PC-9 (cell line): ENCODE measurements at regions of chr2 and their contacts with region 1.

Region 1: GRCh38 chr2:232292395-232293154 is 86.0 kb upstream of the ALPP start:
- DNase-seq: peak in 1 of 2 experiments; percentile 39
- H3K4me3 ChIP-seq: no peak overlapping the region
- H3K27ac ChIP-seq: no peak overlapping the region
- H3K4me1 ChIP-seq: no peaks in the 10 kb centered on the region
- H3K27me3 ChIP-seq: no peaks in the 10 kb centered on the region
- CTCF ChIP-seq: peak; percentile 74

Region 2: DNA sequence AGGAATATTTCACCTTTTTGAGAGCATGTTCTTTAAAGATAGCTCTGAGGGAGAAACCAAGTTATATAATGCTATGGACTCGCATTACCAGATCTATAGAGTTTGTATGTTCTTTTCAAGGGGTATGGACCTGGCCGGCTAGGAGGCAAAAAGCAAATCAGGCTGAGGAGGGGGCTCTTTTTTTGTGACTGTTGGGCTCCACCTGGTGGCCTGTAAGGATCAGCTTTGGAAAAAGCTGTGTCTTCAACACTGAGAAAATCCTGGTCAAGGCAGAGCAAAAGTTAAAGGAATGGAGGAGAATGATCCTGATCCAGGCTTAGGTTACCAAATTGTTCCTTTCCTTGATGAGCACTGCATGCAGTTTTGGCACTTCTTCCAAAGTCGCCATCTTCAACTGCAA is 150.5 kb before region 1 on chr2:
- CTCF ChIA-PET with region 1: no interaction called
- POLR2A ChIA-PET with region 1: no interaction called
- intact Hi-C with region 1: loop called (anchors 10 kb)
- DNase-seq: peak in 1 of 2 experiments; percentile 5
- H3K4me3 ChIP-seq: no peak overlapping the region
- H3K27ac ChIP-seq: no peak overlapping the region
- H3K4me1 ChIP-seq: no peaks in the 10 kb centered on the region
- H3K27me3 ChIP-seq: no peaks in the 10 kb centered on the region
- CTCF ChIP-seq: peak; percentile 74

Region 3: DNA sequence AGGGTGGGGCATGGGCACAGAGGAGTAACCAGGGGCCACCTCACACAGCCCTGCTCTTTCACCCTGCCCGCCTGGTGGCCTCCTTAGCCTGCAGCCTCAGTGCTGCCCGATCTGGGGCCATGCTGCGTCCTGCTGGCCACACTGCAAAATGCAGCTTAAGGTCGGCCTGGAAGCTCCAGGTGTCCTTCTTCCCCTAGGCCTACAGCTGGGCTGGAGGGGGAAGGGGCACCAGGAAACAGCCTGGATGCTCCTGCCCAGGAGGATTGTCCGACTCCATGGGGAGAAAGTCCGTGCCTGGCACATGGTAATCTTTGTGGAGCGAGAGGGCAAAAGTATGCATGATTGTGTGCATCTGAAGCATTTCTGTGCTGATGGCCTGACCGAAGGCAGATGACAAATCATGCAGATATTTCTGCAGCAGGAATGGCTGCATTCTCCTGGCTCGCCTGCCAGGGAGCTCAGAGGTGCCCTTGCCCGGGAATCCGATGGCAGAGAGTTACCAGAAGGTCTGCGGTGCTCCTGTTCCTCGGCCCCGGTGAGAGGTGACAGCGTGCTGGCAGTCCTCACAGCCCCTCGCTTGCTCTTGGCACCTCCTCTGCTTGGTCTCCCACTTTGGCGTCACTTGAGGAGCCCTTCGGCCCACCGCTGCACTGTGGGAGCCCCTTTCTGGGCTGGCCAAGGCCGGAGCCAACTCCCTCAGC is 73.2 kb after region 1 on chr2:
- CTCF ChIA-PET with region 1: no interaction called
- POLR2A ChIA-PET with region 1: no interaction called
- intact Hi-C with region 1: no loop called
- DNase-seq: peak; percentile 78 to 84
- H3K4me3 ChIP-seq: no peak overlapping the region
- H3K27ac ChIP-seq: peak overlapping the region; percentile 52
- H3K4me1 ChIP-seq: peaks cover 12% of the 10 kb centered on the region
- H3K27me3 ChIP-seq: no peaks in the 10 kb centered on the region
- CTCF ChIP-seq: peak; percentile 72

Region 4: GRCh38 chr2:232623783-232624727 is 331.5 kb after region 1 on chr2:
- CTCF ChIA-PET with region 1: no interaction called
- POLR2A ChIA-PET with region 1: no interaction called
- intact Hi-C with region 1: no loop called
- DNase-seq: peak; percentile 36 to 87
- H3K4me3 ChIP-seq: no peak overlapping the region; the same call in 1 of the 2 replicates
- H3K27ac ChIP-seq: peak overlapping the region; percentile 36
- H3K4me1 ChIP-seq: peaks cover 18% of the 10 kb centered on the region
- H3K27me3 ChIP-seq: no peaks in the 10 kb centered on the region
- CTCF ChIP-seq: no peak